Activated CD8-positive, alpha-beta T cell treated with anti-CD3 and anti-CD28 coated beads for 36 hours (primary cell): ENCODE measurements at regions of chr7 and their contacts with region 1.

Region 1: GRCh38 chr7:604001-604883 is 84.6 kb upstream of the PDGFA start:
- DNase-seq: peak; percentile 98
- ATAC-seq: peak; percentile 50
- H3K4me3 Mint-ChIP-seq: peak overlapping the region; percentile 80
- H3K27ac Mint-ChIP-seq: peak overlapping the region; percentile 100
- H3K4me1 Mint-ChIP-seq: peaks cover 72% of the 10 kb centered on the region
- H3K27me3 Mint-ChIP-seq: no peaks in the 10 kb centered on the region
- CTCF ChIP-seq: no peak

Region 2: DNA sequence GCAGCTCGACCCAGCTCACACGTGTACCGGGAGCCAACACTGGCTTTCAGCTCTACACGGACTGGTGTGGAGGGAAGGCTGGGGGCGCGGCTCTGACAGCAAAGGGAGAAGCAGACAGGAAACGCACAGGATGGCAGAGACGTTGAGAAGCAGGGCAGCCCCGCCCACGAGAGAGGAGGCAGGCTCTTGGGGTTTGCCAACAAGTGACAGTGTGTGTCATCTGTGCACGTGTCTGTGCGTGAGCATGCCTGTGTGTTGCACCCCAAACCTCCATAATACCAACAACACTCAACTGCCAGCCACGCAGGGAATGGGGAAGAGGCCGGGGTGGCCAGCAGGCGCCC is 20.1 kb before region 1 on chr7:
- CTCF ChIA-PET with region 1: interaction called, 4 read pairs
- POLR2A ChIA-PET with region 1: interaction called, 50 read pairs
- intact Hi-C with region 1: no loop called
- DNase-seq: peak; percentile 98
- ATAC-seq: peak; percentile 84
- H3K4me3 Mint-ChIP-seq: peak overlapping the region; percentile 78
- H3K27ac Mint-ChIP-seq: peak overlapping the region; percentile 96
- H3K4me1 Mint-ChIP-seq: peaks cover 39% of the 10 kb centered on the region
- H3K27me3 Mint-ChIP-seq: no peaks in the 10 kb centered on the region
- CTCF ChIP-seq: no peak

Region 3: GRCh38 chr7:593324-594115 is 10.7 kb before region 1 on chr7:
- CTCF ChIA-PET with region 1: no interaction called
- POLR2A ChIA-PET with region 1: interaction called, 12 read pairs
- intact Hi-C with region 1: no loop called
- DNase-seq: peak; percentile 67
- ATAC-seq: peak; percentile 59
- H3K4me3 Mint-ChIP-seq: peak overlapping the region; percentile 32
- H3K27ac Mint-ChIP-seq: peak overlapping the region; percentile 59
- H3K4me1 Mint-ChIP-seq: peaks cover 42% of the 10 kb centered on the region
- H3K27me3 Mint-ChIP-seq: no peaks in the 10 kb centered on the region
- CTCF ChIP-seq: no peak

Region 4: GRCh38 chr7:620052-620451 is 15.8 kb after region 1 on chr7:
- CTCF ChIA-PET with region 1: interaction called, 10 read pairs
- POLR2A ChIA-PET with region 1: interaction called, 116 read pairs
- intact Hi-C with region 1: no loop called
- DNase-seq: peak; percentile 35
- ATAC-seq: peak; percentile 33
- H3K4me3 Mint-ChIP-seq: peak overlapping the region; percentile 23
- H3K27ac Mint-ChIP-seq: peak overlapping the region; percentile 100
- H3K4me1 Mint-ChIP-seq: peaks cover 44% of the 10 kb centered on the region
- H3K27me3 Mint-ChIP-seq: no peaks in the 10 kb centered on the region
- CTCF ChIP-seq: no peak